Naive thymus-derived CD4-positive, alpha-beta T cell (primary cell): ENCODE measurements at regions of chr12 and their contacts with region 1.

Region 1: DNA sequence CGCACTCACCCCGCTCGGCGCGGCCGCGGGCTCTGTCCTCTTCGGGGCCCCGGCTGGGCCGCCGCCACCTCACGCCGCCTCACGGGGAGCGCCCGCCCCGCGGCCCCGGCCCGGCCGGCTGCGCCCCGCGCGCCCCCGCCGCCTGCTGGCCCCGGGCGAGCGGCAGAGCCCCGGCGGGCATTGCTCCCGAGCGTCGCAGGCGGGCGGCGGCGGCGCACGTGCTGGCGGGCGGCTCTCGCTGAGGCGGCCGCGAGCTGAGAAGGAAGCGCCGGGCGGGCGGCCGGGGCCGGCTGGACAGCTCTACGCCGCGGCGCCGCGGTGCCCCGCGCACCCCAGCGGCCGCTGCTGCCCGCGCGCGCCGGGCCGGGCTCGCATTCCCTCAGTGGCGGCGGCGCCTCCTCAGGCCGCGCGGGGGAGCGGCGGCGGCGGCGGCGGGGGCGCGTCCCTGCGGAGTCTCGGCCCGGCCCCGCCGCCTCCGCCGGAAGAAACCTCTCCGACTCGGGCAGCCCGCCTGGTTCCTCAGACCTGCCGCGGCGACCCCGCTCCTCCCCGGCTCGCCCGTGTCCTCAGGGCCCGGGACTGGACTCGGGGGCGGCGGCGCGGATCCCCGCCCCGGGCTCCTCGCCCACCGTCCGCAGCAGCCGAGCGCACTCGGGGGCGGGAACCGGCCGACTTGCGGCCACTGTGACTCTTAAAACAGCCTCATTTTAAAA is at the start of gene PITPNM2:
- DNase-seq: peak; percentile 44 to 78 (median 68)
- ATAC-seq: peak; percentile 90
- H3K4me3 ChIP-seq: peak within 1 kb of the TSS; percentile 74
- H3K4me3 Mint-ChIP-seq: peak within 1 kb of the TSS; percentile 83 to 95 (median 89)
- H3K27ac ChIP-seq: peak within 1 kb of the TSS; percentile 82
- H3K27ac Mint-ChIP-seq: peak within 1 kb of the TSS; percentile 80 to 92 (median 90)
- H3K4me1 ChIP-seq: peaks cover 6 to 29% of the 10 kb centered on the region in 2 donors
- H3K4me1 Mint-ChIP-seq: peaks cover 24 to 48% (median 40%) of the 10 kb centered on the region in 7 donors
- H3K27me3 ChIP-seq: no peaks in the 10 kb centered on the region
- H3K27me3 Mint-ChIP-seq: peaks cover 0 to 20% (median 0%) of the 10 kb centered on the region in 5 donors
- total RNA-seq, gene PITPNM2: 22.2 to 65.3 (median 56.6) TPM

Region 2: GRCh38 chr12:122980183-122981046 is 170.5 kb before region 1 on chr12 and contains the start of gene ARL6IP4:
- CTCF ChIA-PET with region 1: interaction called, 3 read pairs
- POLR2A ChIA-PET with region 1: interaction called, 5 read pairs
- intact Hi-C with region 1: loop called (anchors 2 kb)
- DNase-seq: peak; percentile 46 to 72 (median 63)
- ATAC-seq: peak; percentile 81
- H3K4me3 ChIP-seq: peak within 1 kb of the TSS; percentile 84
- H3K4me3 Mint-ChIP-seq: peak within 1 kb of the TSS; percentile 86 to 95 (median 90)
- H3K27ac ChIP-seq: peak within 1 kb of the TSS; percentile 81
- H3K27ac Mint-ChIP-seq: peak within 1 kb of the TSS; percentile 81 to 92 (median 87)
- H3K4me1 ChIP-seq: peaks cover 41 to 46% of the 10 kb centered on the region in 2 donors
- H3K4me1 Mint-ChIP-seq: peaks cover 39 to 73% (median 53%) of the 10 kb centered on the region in 7 donors
- H3K27me3 ChIP-seq: no peaks in the 10 kb centered on the region
- H3K27me3 Mint-ChIP-seq: no peaks in the 10 kb centered on the region
- total RNA-seq, gene ARL6IP4: 137 to 189 (median 169) TPM

Region 3: GRCh38 chr12:123006977-123007376 is 143.9 kb before region 1 on chr12:
- CTCF ChIA-PET with region 1: no interaction called
- POLR2A ChIA-PET with region 1: no interaction called
- intact Hi-C with region 1: no loop called
- DNase-seq: no peak
- ATAC-seq: no peak
- H3K4me3 ChIP-seq: no peak overlapping the region
- H3K4me3 Mint-ChIP-seq: no peak overlapping the region
- H3K27ac ChIP-seq: no peak overlapping the region
- H3K27ac Mint-ChIP-seq: peak overlapping the region in 2 of 9 donors; percentile 17 to 57
- H3K4me1 ChIP-seq: no peaks in the 10 kb centered on the region
- H3K4me1 Mint-ChIP-seq: no peaks in the 10 kb centered on the region
- H3K27me3 ChIP-seq: no peaks in the 10 kb centered on the region
- H3K27me3 Mint-ChIP-seq: no peaks in the 10 kb centered on the region

Region 4: DNA sequence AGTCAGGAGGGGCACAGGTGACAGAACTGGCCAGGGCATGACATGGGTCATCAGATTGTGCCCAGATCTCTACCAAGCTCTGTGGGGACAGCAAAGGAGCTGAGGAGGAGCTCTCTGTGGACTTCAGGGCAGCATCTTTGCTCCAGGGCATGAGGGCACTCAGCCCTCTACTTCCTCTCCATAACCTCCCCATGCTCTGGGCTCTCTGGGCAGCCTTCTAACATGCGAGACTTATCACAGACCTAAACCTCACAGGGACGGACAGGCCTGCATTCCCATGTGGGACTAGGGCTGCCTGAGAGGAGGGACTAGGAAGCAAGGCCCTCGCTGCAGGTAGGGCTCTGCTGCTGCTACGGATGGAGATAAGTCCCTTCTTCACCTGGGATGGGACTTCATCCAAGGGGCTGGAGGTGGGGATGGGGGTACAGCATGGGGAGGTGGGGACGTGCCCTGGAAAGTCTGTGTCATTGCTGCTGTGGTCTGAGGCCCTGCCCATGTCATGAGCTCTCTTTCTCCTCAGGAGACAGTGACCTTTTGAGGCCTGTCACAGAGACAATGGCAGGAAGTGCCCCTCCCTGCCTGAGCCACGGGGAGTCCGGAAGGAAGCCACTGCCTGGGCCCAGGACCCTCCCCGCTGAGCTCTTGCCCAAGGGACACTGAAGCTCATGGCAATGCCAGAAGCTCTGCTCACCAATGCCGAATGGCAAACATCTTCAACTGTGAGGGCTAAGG is 44.1 kb before region 1 on chr12:
- CTCF ChIA-PET with region 1: interaction called, 3 read pairs
- POLR2A ChIA-PET with region 1: interaction called, 14 read pairs
- intact Hi-C with region 1: loop called (anchors 2 to 5 kb)
- DNase-seq: peak in 8 of 9 donors; percentile 35 to 69 (median 48)
- ATAC-seq: peak; percentile 91
- H3K4me3 ChIP-seq: peak overlapping the region; percentile 48
- H3K4me3 Mint-ChIP-seq: peak overlapping the region; percentile 26 to 87 (median 78)
- H3K27ac ChIP-seq: peak overlapping the region; percentile 62
- H3K27ac Mint-ChIP-seq: peak overlapping the region; percentile 87 to 98 (median 95)
- H3K4me1 ChIP-seq: peaks cover 20 to 45% of the 10 kb centered on the region in 2 donors
- H3K4me1 Mint-ChIP-seq: peaks cover 52 to 85% (median 79%) of the 10 kb centered on the region in 7 donors
- H3K27me3 ChIP-seq: no peaks in the 10 kb centered on the region
- H3K27me3 Mint-ChIP-seq: no peaks in the 10 kb centered on the region

Region 5: DNA sequence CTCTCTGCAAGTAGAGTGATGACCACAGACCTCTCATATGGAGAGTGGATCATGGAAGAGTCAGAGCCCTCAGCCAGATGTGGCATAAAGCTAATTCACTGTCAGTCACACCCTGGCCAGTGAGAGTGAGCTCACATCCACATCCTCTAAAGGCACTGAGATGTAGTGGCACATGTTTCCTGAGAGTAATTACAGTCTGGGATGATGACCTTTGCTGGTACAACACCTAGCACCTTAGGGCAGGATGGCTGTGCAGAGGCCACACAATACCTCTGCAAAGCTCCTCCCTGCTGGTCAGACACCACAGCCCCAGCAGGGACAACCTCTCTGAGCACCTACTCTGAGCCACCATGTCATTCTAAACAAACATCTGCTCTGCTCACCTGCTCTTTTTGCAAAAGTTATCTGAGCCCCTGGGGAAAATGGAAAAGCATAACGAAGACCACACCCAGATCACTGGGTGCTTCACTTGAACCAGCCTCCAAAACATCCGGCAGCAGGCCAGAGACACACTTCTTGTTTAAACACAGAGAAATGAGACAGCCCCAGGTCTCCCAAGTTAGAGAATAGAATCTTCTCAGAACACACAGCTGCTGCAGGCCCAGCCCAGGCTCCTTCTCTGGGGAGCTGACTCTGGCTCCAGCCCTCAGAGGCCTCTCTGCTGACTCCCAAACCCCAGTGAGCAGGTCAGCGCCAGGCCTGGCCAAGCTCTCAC is 30.3 kb before region 1 on chr12:
- CTCF ChIA-PET with region 1: interaction called, 9 read pairs
- POLR2A ChIA-PET with region 1: interaction called, 70 read pairs
- intact Hi-C with region 1: loop called in 1 of 2 experiments (anchors 1 kb)
- DNase-seq: peak in 7 of 9 donors; percentile 27 to 76 (median 67)
- ATAC-seq: peak; percentile 60
- H3K4me3 ChIP-seq: no peak overlapping the region
- H3K4me3 Mint-ChIP-seq: peak overlapping the region; percentile 66 to 83 (median 73)
- H3K27ac ChIP-seq: peak overlapping the region; percentile 71
- H3K27ac Mint-ChIP-seq: peak overlapping the region; percentile 91 to 100 (median 96)
- H3K4me1 ChIP-seq: peaks cover 3 to 68% of the 10 kb centered on the region in 2 donors
- H3K4me1 Mint-ChIP-seq: peaks cover 40 to 81% (median 75%) of the 10 kb centered on the region in 7 donors
- H3K27me3 ChIP-seq: no peaks in the 10 kb centered on the region
- H3K27me3 Mint-ChIP-seq: no peaks in the 10 kb centered on the region